K562 (cell line): ENCODE measurements at regions of chr6 and their contacts with region 1.

Region 1: DNA sequence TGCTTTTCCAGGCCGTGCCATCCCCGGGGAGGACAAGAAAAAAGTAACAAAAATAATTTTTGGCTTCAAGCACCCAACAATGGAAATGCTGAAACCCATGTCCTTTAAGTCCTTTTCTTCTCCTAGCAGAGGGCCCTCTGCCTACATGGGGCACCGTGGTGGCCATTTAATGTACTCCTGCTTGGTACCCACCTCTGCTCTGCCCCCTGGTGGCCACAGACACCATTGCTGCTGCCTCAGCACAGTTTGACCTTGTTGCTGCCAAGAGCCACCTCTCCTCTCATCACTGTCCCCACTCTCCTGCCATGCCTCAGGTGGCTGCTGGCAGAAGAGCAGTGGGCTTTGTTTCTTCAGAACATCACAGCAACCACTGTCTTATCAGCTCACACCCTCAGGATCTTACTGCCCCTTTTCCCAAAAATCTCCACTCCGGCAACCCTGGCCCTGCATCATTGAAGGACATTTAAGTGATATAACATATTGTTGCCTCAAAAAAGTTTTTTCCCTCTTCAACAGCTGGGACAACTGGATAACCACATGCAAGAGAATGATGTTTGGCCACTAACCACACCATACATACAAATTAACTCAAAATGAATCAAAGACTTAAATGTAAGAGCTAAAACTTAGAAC is 12.9 kb upstream of the ARMC2 start:
- DNase-seq: peak; percentile 76 to 83 (median 78)
- ATAC-seq: peak; percentile 98
- H3K4me3 ChIP-seq: no peak overlapping the region
- H3K27ac ChIP-seq: no peak overlapping the region
- H3K4me1 ChIP-seq: peaks cover 0 to 9% of the 10 kb centered on the region in 2 experiments; a peak in 4 of 5 replicates
- H3K27me3 ChIP-seq: peaks cover 19 to 40% of the 10 kb centered on the region in 2 experiments; a peak in 4 of 5 replicates
- CTCF ChIP-seq: peak; percentile 82 to 87 (median 86)
- EP300 ChIP-seq: no peak
- POLR2A ChIP-seq: no peak
- RAD21 ChIP-seq: peak; percentile 76 to 87

Region 2: GRCh38 chr6:108113557-108114519 is 721.5 kb before region 1 on chr6:
- CTCF ChIA-PET with region 1: no interaction called
- POLR2A ChIA-PET with region 1: no interaction called
- in situ Hi-C with region 1: no loop called
- intact Hi-C with region 1: loop called (anchors 10 kb)
- DNase-seq: peak; percentile 60 to 67 (median 62)
- ATAC-seq: peak; percentile 81
- H3K4me3 ChIP-seq: no peak overlapping the region
- H3K27ac ChIP-seq: no peak overlapping the region
- H3K4me1 ChIP-seq: peaks cover 0 to 31% of the 10 kb centered on the region in 2 experiments; a peak in 3 of 5 replicates
- H3K27me3 ChIP-seq: peaks cover 11 to 45% of the 10 kb centered on the region in 2 experiments; a peak in 4 of 5 replicates
- CTCF ChIP-seq: peak; percentile 51 to 77 (median 67); a peak in 5 of 6 replicates
- EP300 ChIP-seq: no peak
- POLR2A ChIP-seq: no peak
- RAD21 ChIP-seq: peak; percentile 84 to 86

Region 3: DNA sequence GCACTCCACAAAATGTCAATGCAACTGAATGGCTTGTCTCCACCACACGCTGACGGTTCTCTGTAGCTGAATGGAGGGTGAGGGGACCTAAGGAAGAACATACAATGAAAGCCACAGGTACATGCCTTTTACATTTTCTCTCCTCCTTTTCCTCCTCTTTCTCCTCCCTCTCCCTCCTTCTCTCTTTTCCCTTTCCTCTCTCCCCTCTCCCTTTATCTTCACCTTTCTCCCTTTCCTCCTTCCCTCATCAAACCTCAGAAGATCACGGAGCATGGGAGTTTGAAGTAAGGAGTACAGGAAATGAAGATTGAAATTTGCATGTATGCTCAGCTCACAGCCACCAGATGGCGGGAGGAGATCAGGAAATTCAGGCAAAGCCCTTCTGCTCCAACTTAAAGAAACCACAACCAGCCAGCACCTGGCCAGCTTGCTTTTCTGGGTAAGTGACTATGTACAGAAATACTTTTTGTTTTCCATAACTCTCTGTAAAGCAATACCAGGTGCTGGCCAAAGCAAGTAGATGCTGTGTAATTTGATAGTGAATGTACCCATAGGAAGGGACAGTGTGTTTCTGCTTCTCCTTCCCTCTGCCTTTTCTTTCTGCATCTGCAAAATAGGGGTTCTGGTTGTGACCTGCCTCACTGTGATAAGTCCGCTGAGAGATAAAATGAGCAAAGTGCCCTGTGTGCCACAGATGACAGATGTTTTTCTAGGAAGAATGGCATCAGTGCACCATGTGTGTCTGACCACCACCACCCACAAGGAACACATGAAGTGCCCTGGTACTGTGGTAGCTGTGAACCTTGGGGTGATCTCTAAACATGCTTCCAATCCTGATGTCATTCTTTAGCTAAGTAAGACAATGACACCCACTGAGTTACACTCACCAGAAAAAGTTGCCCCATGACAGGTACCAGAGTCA is 293.2 kb before region 1 on chr6:
- CTCF ChIA-PET with region 1: interaction called, 31 read pairs
- POLR2A ChIA-PET with region 1: no interaction called
- in situ Hi-C with region 1: loop called (anchors 5 kb)
- intact Hi-C with region 1: loop called (anchors 1 kb)
- DNase-seq: peak; percentile 64 to 81 (median 64)
- ATAC-seq: peak; percentile 94
- H3K4me3 ChIP-seq: no peak overlapping the region
- H3K27ac ChIP-seq: no peak overlapping the region
- H3K4me1 ChIP-seq: no peaks in the 10 kb centered on the region
- H3K27me3 ChIP-seq: 0 out of 5 replicates have a peak, but pooled peaks cover 0 to 4% of the 10 kb centered on the region in 2 experiments
- CTCF ChIP-seq: peak; percentile 83 to 96 (median 87)
- EP300 ChIP-seq: no peak
- POLR2A ChIP-seq: no peak
- RAD21 ChIP-seq: peak; percentile 98 to 99

Region 4: GRCh38 chr6:108782179-108783041 is 52.9 kb before region 1 on chr6:
- CTCF ChIA-PET with region 1: interaction called, 3 read pairs
- POLR2A ChIA-PET with region 1: no interaction called
- in situ Hi-C with region 1: no loop called
- intact Hi-C with region 1: loop called (anchors 5 kb)
- DNase-seq: peak; percentile 68 to 89 (median 79)
- ATAC-seq: peak; percentile 99
- H3K4me3 ChIP-seq: no peak overlapping the region
- H3K27ac ChIP-seq: no peak overlapping the region
- H3K4me1 ChIP-seq: peaks cover 0 to 9% of the 10 kb centered on the region in 2 experiments; a peak in 2 of 5 replicates
- H3K27me3 ChIP-seq: peaks cover 16 to 28% of the 10 kb centered on the region in 2 experiments
- CTCF ChIP-seq: peak; percentile 92 to 94 (median 93)
- EP300 ChIP-seq: 0 out of 2 replicates have a peak, but pooled peaks have one; percentile 8
- POLR2A ChIP-seq: no peak
- RAD21 ChIP-seq: peak; percentile 92 to 95

Region 5: DNA sequence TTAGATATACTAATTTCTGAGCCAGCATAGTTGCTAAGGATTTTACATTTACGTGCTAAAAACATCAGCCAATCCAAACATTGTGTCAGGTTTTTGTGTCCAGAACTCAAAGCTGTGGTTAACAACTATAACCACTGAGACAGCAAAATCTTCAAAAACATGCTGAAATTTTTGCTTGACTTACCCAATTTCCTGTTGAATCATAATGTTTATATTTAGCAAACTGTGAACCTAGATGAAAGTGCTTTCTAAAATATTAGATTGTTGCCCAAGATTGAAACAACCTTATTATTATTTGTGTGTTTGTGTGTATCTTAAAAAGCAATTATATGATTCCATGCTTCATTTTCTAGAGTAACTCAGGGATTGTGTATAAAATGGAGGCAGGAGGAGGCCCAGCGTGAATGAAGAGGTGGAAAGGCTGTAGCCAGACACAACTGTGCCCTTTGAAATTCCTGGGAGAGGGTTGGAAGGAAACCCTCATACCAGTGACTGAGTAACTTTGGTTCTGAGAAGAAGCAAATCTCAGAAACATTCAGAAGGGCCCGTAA is 60.9 kb after region 1 on chr6:
- CTCF ChIA-PET with region 1: interaction called, 5 read pairs
- POLR2A ChIA-PET with region 1: no interaction called
- in situ Hi-C with region 1: no loop called
- intact Hi-C with region 1: loop called (anchors 2 kb)
- DNase-seq: no peak
- ATAC-seq: no peak
- H3K4me3 ChIP-seq: no peak overlapping the region
- H3K27ac ChIP-seq: no peak overlapping the region
- H3K4me1 ChIP-seq: no peaks in the 10 kb centered on the region
- H3K27me3 ChIP-seq: peaks cover 6 to 9% of the 10 kb centered on the region in 2 experiments; a peak in 3 of 5 replicates
- CTCF ChIP-seq: no peak
- EP300 ChIP-seq: no peak
- POLR2A ChIP-seq: no peak
- RAD21 ChIP-seq: no peak